Activated CD8-positive, alpha-beta T cell treated with anti-CD3 and anti-CD28 coated beads, Interleukin-2, amount 10 ng/mL, durations not matched to agents 7 days and 5 days (primary cell): ENCODE measurements at regions of chr6 and their contacts with region 1.

Region 1: GRCh38 chr6:26031595-26032339 is 55.5 kb upstream of the HFE start:
- DNase-seq: peak; percentile 97
- ATAC-seq: peak; percentile 66
- H3K4me3 Mint-ChIP-seq: peak overlapping the region; percentile 93
- H3K27ac Mint-ChIP-seq: peak overlapping the region; percentile 99
- H3K4me1 Mint-ChIP-seq: peaks cover 68% of the 10 kb centered on the region
- H3K27me3 Mint-ChIP-seq: peaks cover 3% of the 10 kb centered on the region

Region 2: GRCh38 chr6:25359191-25359861 is 672.4 kb before region 1 on chr6:
- CTCF ChIA-PET with region 1: no interaction called
- POLR2A ChIA-PET with region 1: no interaction called
- DNase-seq: no peak
- ATAC-seq: no peak
- H3K4me3 Mint-ChIP-seq: no peak overlapping the region
- H3K27ac Mint-ChIP-seq: no peak overlapping the region
- H3K4me1 Mint-ChIP-seq: no peaks in the 10 kb centered on the region
- H3K27me3 Mint-ChIP-seq: no peaks in the 10 kb centered on the region

Region 3: GRCh38 chr6:25732468-25733198 is 299.1 kb before region 1 on chr6:
- CTCF ChIA-PET with region 1: no interaction called
- POLR2A ChIA-PET with region 1: no interaction called
- DNase-seq: no peak
- ATAC-seq: no peak
- H3K4me3 Mint-ChIP-seq: no peak overlapping the region
- H3K27ac Mint-ChIP-seq: no peak overlapping the region
- H3K4me1 Mint-ChIP-seq: no peaks in the 10 kb centered on the region
- H3K27me3 Mint-ChIP-seq: peaks cover 27% of the 10 kb centered on the region

Region 4: GRCh38 chr6:25922301-25922700 is 109.5 kb before region 1 on chr6:
- CTCF ChIA-PET with region 1: no interaction called
- POLR2A ChIA-PET with region 1: no interaction called
- DNase-seq: no peak
- ATAC-seq: no peak
- H3K4me3 Mint-ChIP-seq: no peak overlapping the region
- H3K27ac Mint-ChIP-seq: no peak overlapping the region
- H3K4me1 Mint-ChIP-seq: no peaks in the 10 kb centered on the region
- H3K27me3 Mint-ChIP-seq: peaks cover 3% of the 10 kb centered on the region

Region 5: GRCh38 chr6:25984265-25984664 is 47.5 kb before region 1 on chr6:
- CTCF ChIA-PET with region 1: no interaction called
- POLR2A ChIA-PET with region 1: no interaction called
- DNase-seq: no peak
- ATAC-seq: no peak
- H3K4me3 Mint-ChIP-seq: no peak overlapping the region
- H3K27ac Mint-ChIP-seq: no peak overlapping the region
- H3K4me1 Mint-ChIP-seq: no peaks in the 10 kb centered on the region
- H3K27me3 Mint-ChIP-seq: no peaks in the 10 kb centered on the region

Region 6: DNA sequence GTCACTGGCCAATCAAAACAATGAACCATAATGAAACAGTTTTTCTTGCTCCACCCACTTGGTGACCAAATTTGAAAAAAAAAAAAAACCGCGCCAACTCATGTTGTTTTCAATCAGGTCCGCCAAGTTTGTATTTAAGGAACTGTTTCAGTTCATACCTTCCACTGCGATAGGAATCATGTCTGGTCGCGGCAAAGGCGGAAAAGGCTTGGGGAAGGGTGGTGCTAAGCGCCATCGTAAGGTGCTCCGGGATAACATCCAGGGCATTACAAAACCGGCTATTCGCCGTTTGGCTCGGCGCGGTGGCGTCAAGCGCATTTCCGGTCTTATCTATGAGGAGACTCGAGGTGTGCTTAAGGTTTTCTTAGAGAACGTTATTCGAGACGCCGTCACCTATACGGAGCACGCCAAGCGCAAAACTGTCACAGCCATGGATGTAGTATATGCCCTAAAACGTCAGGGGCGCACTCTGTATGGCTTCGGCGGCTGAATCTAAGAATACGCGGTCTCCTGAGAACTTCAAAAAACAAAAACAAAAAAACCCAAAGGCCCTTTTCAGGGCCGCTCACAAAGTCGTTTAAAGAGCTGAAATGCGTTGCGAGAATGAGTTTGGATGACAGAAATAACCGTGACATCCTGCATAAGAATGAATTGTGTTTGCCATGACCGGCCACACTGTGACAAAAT is 72.1 kb after region 1 on chr6:
- CTCF ChIA-PET with region 1: no interaction called
- POLR2A ChIA-PET with region 1: interaction called, 70 read pairs
- DNase-seq: peak; percentile 93
- ATAC-seq: peak; percentile 89
- H3K4me3 Mint-ChIP-seq: peak overlapping the region; percentile 85
- H3K27ac Mint-ChIP-seq: peak overlapping the region; percentile 98
- H3K4me1 Mint-ChIP-seq: peaks cover 26% of the 10 kb centered on the region
- H3K27me3 Mint-ChIP-seq: peaks cover 2% of the 10 kb centered on the region

Region 7: DNA sequence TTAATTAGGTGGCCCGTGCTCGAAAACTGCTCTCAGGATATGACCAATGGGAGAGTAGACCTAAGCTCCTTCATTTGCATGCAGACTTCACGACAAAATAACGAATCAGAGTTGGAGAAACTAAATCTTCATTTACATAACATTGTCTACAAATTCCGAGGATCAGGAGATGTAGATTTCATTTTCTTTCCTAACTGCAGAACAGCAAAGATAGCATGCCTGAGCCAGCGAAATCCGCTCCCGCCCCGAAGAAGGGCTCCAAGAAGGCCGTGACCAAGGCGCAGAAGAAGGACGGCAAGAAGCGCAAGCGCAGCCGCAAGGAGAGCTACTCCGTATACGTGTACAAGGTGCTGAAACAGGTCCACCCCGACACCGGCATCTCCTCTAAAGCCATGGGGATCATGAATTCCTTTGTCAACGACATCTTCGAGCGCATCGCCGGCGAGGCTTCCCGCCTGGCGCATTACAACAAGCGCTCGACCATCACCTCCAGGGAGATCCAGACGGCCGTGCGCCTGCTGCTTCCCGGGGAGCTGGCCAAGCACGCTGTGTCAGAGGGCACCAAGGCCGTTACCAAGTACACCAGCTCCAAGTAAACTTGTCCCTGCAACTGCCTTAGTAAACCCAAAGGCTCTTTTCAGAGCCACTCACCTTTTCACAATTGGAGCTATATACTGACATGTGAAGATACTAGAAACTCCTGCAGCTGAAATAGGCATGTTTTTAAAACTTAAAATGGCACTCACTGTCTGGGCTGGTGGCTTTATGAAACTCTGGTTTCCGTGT is 152.0 kb after region 1 on chr6:
- CTCF ChIA-PET with region 1: no interaction called
- POLR2A ChIA-PET with region 1: interaction called, 46 read pairs
- DNase-seq: peak; percentile 80
- ATAC-seq: peak; percentile 80
- H3K4me3 Mint-ChIP-seq: peak overlapping the region; percentile 83
- H3K27ac Mint-ChIP-seq: peak overlapping the region; percentile 97
- H3K4me1 Mint-ChIP-seq: peaks cover 79% of the 10 kb centered on the region
- H3K27me3 Mint-ChIP-seq: no peaks in the 10 kb centered on the region

Region 8: GRCh38 chr6:26223650-26224546 is 192.1 kb after region 1 on chr6:
- CTCF ChIA-PET with region 1: no interaction called
- POLR2A ChIA-PET with region 1: interaction called, 15 read pairs
- DNase-seq: peak; percentile 83
- ATAC-seq: peak; percentile 83
- H3K4me3 Mint-ChIP-seq: no peak overlapping the region
- H3K27ac Mint-ChIP-seq: no peak overlapping the region
- H3K4me1 Mint-ChIP-seq: peaks cover 37% of the 10 kb centered on the region
- H3K27me3 Mint-ChIP-seq: no peaks in the 10 kb centered on the region

Region 9: GRCh38 chr6:27132532-27133280 is 1100.9 kb after region 1 on chr6:
- CTCF ChIA-PET with region 1: no interaction called
- POLR2A ChIA-PET with region 1: interaction called, 68 read pairs
- DNase-seq: peak; percentile 95
- ATAC-seq: peak; percentile 76
- H3K4me3 Mint-ChIP-seq: no peak overlapping the region
- H3K27ac Mint-ChIP-seq: no peak overlapping the region
- H3K4me1 Mint-ChIP-seq: peaks cover 68% of the 10 kb centered on the region
- H3K27me3 Mint-ChIP-seq: no peaks in the 10 kb centered on the region

Region 10: DNA sequence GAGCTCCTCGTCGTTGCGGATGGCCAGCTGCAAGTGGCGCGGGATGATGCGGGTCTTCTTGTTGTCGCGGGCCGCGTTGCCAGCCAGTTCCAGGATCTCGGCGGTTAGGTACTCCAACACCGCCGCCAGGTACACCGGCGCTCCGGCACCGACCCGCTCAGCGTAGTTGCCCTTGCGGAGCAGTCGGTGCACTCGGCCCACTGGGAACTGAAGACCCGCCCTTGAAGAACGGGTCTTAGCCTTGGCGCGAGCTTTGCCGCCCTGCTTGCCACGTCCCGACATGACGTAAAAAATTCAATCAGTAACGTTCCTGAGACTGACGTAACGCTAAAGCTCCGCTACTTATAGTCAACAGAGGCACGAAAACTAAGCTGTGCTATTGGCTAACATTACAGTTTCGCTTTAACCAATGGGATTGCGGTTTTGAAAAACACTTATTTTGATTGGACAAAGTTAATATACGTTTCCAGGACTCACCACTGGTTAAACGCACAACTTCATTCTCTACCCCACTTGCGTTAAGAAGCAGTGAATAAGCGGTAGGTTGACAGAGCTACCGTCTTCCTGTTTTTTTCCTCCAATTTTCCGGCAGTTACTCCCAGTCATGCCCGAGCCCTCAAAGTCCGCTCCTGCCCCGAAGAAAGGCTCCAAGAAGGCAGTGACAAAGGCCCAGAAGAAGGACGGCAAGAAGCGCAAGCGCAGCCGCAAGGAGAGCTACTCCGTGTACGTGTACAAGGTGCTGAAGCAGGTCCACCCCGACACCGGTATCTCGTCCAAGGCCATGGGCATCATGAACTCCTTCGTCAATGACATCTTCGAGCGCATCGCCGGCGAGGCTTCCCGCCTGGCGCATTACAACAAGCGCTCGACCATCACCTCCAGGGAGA is 1806.5 kb after region 1 on chr6:
- CTCF ChIA-PET with region 1: no interaction called
- POLR2A ChIA-PET with region 1: interaction called, 51 read pairs
- DNase-seq: peak; percentile 92
- ATAC-seq: peak; percentile 78
- H3K4me3 Mint-ChIP-seq: no peak overlapping the region
- H3K27ac Mint-ChIP-seq: no peak overlapping the region
- H3K4me1 Mint-ChIP-seq: peaks cover 33% of the 10 kb centered on the region
- H3K27me3 Mint-ChIP-seq: no peaks in the 10 kb centered on the region